ENCODE measurements at regions of chr10 and their contacts with region 1.

Region 1: GRCh38 chr10:61943674-61944410 is 42.3 kb downstream of the ARID5B start:
- DNase-seq: peak; percentile 73
- H3K4me3 Mint-ChIP-seq: peak overlapping the region; percentile 82
- H3K27ac Mint-ChIP-seq: peak overlapping the region; percentile 93
- H3K4me1 Mint-ChIP-seq: peaks cover 49% of the 10 kb centered on the region
- H3K27me3 Mint-ChIP-seq: no peaks in the 10 kb centered on the region

Region 2: DNA sequence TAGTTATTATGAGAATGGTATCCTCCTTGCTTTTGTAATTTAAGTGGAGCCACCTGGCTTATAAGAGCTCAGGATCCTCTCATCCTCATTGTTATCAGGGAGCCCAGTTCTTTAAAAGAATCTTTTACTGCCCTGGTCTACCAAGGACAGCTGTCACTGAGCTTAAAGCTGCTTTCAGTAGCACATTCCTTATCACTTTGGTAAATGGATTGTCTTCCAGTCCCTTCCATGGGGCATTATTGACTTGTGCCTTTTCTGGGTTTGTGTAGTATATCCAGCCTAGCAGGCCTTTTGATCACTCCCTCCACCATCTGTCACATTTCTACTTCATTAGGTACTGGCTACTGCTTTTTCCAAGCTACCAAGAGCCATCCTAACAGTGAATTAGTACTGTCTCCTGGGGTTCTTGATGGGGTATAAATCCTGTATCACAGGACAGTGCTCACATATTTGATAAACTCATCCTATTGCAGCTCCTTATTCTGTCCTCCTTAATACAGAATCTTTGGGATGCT is 699.5 kb before region 1 on chr10:
- intact Hi-C with region 1: no loop called
- DNase-seq: no peak
- H3K4me3 Mint-ChIP-seq: no peak overlapping the region
- H3K27ac Mint-ChIP-seq: no peak overlapping the region
- H3K4me1 Mint-ChIP-seq: no peaks in the 10 kb centered on the region
- H3K27me3 Mint-ChIP-seq: no peaks in the 10 kb centered on the region

Region 3: GRCh38 chr10:61903221-61903927 is 40.5 kb before region 1 on chr10:
- intact Hi-C with region 1: loop called (anchors 1 kb)
- DNase-seq: peak; percentile 92
- H3K4me3 Mint-ChIP-seq: peak overlapping the region; percentile 92
- H3K27ac Mint-ChIP-seq: peak overlapping the region; percentile 95
- H3K4me1 Mint-ChIP-seq: peaks cover 36% of the 10 kb centered on the region
- H3K27me3 Mint-ChIP-seq: no peaks in the 10 kb centered on the region

Region 4: GRCh38 chr10:61964949-61965702 is 21.3 kb after region 1 on chr10:
- intact Hi-C with region 1: loop called (anchors 1 kb)
- DNase-seq: no peak
- H3K4me3 Mint-ChIP-seq: no peak overlapping the region
- H3K27ac Mint-ChIP-seq: peak overlapping the region; percentile 48
- H3K4me1 Mint-ChIP-seq: peaks cover 75% of the 10 kb centered on the region
- H3K27me3 Mint-ChIP-seq: no peaks in the 10 kb centered on the region

Region 5: DNA sequence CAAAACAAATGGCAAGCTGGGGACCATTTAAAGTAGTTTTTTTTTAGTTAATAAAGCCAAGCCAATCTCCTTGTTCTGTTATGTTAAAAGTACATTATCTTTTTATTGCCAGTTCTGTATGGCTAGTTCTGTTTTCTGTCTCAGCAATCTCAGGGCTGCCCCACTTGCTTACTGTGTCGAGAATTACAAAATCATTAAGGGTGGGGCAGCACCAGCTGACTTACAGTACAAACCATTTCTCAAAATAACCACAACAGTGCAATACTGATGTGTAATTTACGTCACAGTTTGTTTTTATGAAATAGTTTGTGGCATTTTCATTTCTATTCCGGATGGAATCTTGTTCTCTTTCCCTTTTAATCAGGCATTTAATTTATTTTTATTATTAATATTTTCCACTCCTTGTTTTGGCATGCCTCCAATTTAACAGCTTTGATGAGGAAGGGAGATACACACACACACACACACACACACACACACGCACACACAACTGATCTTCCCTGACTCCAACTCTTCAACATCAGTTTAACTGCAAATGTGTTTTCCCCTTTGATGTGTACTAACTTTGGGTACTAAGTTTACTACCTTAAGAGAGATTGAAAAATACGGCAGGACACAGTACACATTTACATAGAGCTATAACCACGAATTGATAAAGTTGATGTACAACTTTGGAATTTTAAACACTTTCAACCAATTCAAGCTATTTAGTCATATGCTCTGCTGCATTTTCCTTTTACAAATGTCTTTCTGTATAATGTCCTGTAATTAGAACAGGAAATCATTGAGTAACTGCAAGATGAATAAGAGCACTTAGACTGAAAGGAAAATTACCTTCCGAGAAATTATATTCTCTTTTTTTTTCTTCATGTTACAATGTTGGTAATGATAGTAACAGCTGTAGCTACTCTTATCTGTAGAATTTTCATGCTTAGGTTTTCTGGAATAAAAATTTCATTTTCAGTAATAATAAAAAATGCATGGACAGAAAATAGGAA is 49.1 kb after region 1 on chr10:
- intact Hi-C with region 1: loop called (anchors 1 kb)
- DNase-seq: peak; percentile 91
- H3K4me3 Mint-ChIP-seq: peak overlapping the region; percentile 77
- H3K27ac Mint-ChIP-seq: peak overlapping the region; percentile 93
- H3K4me1 Mint-ChIP-seq: peaks cover 65% of the 10 kb centered on the region
- H3K27me3 Mint-ChIP-seq: no peaks in the 10 kb centered on the region

Region 6: DNA sequence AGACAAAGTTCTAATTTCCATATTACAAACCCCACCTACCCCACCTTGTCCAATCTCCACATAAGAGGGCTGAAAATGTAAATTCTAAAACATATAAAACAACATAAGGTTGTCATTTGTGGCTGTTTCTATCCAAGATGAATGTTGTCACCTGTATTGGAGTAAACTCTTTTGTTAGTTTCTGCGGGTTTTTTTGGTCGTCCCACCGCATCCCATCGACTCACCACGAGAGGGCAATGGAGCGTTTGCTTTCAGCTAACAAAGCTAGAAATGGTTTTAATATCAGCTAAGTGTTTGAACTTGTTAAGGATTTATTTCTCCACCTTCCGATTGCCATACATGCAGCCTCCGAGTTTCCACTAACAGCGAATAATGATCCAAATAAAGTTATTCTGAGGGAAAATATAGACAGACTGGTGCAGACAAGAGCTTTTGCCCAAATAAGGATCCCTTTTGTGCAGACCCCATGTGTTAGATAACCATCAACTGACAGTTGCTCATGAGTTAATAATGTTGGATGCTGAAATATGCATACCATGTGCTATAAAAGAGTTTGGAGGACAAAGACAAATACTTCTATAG is 94.9 kb after region 1 on chr10:
- intact Hi-C with region 1: loop called (anchors 2 kb)
- DNase-seq: peak; percentile 94
- H3K4me3 Mint-ChIP-seq: peak overlapping the region; percentile 67
- H3K27ac Mint-ChIP-seq: peak overlapping the region; percentile 76
- H3K4me1 Mint-ChIP-seq: peaks cover 73% of the 10 kb centered on the region
- H3K27me3 Mint-ChIP-seq: no peaks in the 10 kb centered on the region